ENCODE measurements at regions of chr3 and their contacts with region 1.

Region 1: DNA sequence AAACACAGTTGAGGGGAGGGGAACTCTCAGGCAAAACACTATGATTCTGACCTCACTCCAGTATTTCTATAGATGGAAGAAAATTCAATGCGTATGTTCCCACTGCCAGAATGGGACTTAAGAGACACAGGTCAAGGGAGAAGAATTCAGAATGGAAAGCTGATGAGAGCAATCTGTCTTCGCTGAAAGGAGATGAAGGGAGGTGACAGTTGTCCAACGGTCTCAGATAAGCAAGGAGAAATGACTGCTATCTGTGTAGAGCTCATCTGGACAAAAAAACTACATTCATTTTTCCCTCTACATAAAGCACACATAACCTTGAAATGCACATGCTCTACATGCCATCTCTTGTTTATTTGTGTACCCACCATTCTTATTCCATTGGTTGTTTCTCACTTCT is 405.1 kb downstream of the LSAMP start:
- DNase-seq: no peak
- H3K4me3 ChIP-seq: no peak overlapping the region
- H3K27ac ChIP-seq: no peak overlapping the region
- H3K4me1 ChIP-seq: no peaks in the 10 kb centered on the region
- H3K27me3 ChIP-seq: no peaks in the 10 kb centered on the region
- CTCF ChIP-seq: no peak
- POLR2A ChIP-seq: no peak

Region 2: GRCh38 chr3:117537949-117538348 is 1497.8 kb after region 1 on chr3:
- intact Hi-C with region 1: loop called (anchors 5 kb)
- DNase-seq: no peak
- H3K4me3 ChIP-seq: no peak overlapping the region
- H3K27ac ChIP-seq: no peak overlapping the region
- H3K4me1 ChIP-seq: no peaks in the 10 kb centered on the region
- H3K27me3 ChIP-seq: no peaks in the 10 kb centered on the region
- CTCF ChIP-seq: no peak
- POLR2A ChIP-seq: no peak

Measured in breast epithelium (tissue), 4 donors.